ENCODE measurements at regions of chr2 and their contacts with region 1.

Region 1: DNA sequence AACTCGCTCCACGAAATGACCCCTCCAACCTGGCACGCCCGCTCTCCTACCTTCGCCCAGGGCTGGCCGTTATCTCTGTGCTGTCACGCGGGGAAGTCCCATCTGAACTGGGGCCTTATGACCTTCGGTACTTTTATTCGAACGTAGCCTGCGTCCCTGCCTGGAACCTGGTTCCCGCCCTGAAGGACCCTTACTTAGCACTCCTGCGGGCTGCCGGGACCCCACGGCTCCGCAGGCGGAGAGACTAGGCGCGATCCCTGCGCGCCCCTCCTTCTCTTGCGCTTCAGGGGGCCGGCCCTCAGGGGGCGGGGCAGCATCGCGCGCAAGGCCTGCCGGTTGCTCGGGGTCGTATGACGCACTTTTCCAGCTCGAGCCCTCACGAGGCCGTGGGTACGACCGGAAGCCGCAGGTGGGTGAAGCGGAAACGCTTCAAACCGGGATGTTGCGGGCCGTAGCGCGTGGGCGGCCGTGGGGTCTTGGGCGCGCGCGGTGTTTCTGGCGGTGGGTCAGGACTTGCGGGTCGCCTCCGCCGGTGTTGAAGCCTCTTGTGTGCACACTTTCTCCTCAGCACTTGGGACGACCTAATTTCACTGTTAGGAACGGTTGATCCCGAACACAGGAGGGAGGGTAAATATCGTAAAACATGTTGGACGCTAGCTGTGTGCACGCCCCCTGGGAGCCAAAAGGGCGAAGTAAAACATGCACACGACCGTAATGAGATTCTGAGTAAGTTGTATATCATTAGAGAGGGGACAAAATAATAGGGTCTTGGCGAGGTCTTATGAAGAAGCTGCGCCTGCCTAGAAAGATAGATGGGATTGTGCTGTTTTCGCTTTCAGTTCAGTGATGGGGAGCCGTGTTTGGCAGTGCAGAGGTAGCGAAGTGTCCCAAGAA is at the starts of genes LIPT1 and TSGA10:
- H3K4me3 Mint-ChIP-seq: peak within 1 kb of the TSS; percentile 97
- H3K27ac Mint-ChIP-seq: peak within 1 kb of the TSS; percentile 94
- H3K4me1 Mint-ChIP-seq: peaks cover 37% of the 10 kb centered on the region
- H3K27me3 Mint-ChIP-seq: no peaks in the 10 kb centered on the region

Region 2: DNA sequence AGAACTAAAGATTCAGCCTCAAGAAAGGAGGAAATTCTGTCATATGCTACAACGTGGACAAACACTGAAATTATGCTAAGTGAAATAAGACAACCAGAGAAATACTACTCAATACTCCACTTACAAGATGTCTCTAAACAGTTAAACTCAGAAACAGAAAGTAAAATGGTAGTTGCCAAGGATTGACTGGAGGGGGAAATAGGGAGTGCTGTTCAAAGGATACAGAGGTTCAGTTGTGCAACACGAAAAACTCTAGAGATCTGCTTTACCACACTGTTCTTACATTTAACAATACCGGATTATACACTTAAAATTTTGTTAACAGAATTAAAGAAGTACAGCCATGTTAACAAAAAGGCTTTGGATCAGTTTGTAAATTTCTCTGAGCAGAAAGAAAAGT is 53.2 kb before region 1 on chr2:
- intact Hi-C with region 1: loop called (anchors 10 kb)
- H3K4me3 Mint-ChIP-seq: no peak overlapping the region
- H3K27ac Mint-ChIP-seq: no peak overlapping the region
- H3K4me1 Mint-ChIP-seq: peaks cover 12% of the 10 kb centered on the region
- H3K27me3 Mint-ChIP-seq: no peaks in the 10 kb centered on the region

Region 3: GRCh38 chr2:99141110-99142108 is 13.5 kb before region 1 on chr2 and contains the start of gene C2orf15:
- intact Hi-C with region 1: loop called (anchors 2 kb)
- H3K4me3 Mint-ChIP-seq: peak within 1 kb of the TSS; percentile 97
- H3K27ac Mint-ChIP-seq: peak within 1 kb of the TSS; percentile 88
- H3K4me1 Mint-ChIP-seq: peaks cover 32% of the 10 kb centered on the region
- H3K27me3 Mint-ChIP-seq: peaks cover 11% of the 10 kb centered on the region

Region 4: GRCh38 chr2:99190548-99190947 is 35.7 kb after region 1 on chr2:
- intact Hi-C with region 1: no loop called
- H3K4me3 Mint-ChIP-seq: no peak overlapping the region
- H3K27ac Mint-ChIP-seq: no peak overlapping the region
- H3K4me1 Mint-ChIP-seq: no peaks in the 10 kb centered on the region
- H3K27me3 Mint-ChIP-seq: no peaks in the 10 kb centered on the region

Measured in dendritic cell treated with granulocyte-macrophage colony-stimulating factor and Interleukin-4, amounts not matched to agents 40 ng/mL and 50 ng/mL, for 4 days (primary cell).